Activated naive CD4-positive, alpha-beta T cell treated with anti-CD3 and anti-CD28 coated beads for 36 hours (primary cell): ENCODE measurements at regions of chr7 and their contacts with region 1.

Region 1: GRCh38 chr7:76314042-76314721 is 11.7 kb downstream of the HSPB1 start:
- DNase-seq: peak; percentile 99
- H3K4me3 Mint-ChIP-seq: no peak overlapping the region
- H3K27ac Mint-ChIP-seq: no peak overlapping the region
- H3K4me1 Mint-ChIP-seq: peaks cover 18% of the 10 kb centered on the region
- H3K27me3 Mint-ChIP-seq: no peaks in the 10 kb centered on the region

Region 2: DNA sequence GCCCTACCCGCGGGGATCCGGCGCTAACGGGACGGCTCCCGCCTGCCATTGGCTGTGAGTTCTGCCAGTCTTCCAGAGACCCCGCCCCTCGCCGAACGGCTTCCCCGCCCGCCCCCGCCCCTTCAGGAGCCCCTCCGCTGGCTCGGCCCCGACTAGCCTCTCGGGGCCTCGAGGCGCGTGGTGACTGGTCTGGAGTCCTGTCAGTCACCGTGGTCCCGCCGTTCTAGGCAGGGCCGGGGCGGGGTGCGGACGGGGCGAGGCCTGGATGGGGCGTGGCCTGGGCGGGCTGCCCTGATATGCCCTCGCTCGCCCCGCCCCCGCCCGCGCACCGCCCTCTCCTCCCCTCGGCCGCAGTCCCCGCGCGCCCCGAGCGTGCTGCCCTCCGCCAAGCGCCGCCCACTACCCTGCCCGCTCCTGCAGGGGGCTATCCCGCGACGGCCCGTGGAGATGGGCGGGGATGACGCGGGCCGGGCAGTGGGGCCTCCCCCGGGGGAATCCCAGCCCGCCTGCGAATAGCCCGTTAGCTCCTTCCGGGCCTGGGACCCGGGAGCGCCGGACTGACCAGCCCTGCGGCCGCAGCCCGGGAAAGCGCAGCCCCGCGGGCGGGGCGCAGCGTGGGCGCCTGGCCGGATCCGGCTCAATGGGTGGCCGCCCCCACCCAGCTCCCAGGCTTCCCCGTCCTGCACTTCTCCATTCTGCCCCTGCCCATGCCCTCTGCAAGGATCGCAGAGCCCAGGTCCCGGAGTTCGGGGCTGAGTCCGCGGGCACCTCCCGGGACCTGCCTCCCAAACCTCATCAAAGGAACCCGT is 575.0 kb before region 1 on chr7:
- CTCF ChIA-PET with region 1: no interaction called
- intact Hi-C with region 1: loop called (anchors 2 kb)
- DNase-seq: peak; percentile 99
- H3K4me3 Mint-ChIP-seq: peak overlapping the region; percentile 92
- H3K27ac Mint-ChIP-seq: peak overlapping the region; percentile 81
- H3K4me1 Mint-ChIP-seq: peaks cover 14% of the 10 kb centered on the region
- H3K27me3 Mint-ChIP-seq: peaks cover 10% of the 10 kb centered on the region

Region 3: DNA sequence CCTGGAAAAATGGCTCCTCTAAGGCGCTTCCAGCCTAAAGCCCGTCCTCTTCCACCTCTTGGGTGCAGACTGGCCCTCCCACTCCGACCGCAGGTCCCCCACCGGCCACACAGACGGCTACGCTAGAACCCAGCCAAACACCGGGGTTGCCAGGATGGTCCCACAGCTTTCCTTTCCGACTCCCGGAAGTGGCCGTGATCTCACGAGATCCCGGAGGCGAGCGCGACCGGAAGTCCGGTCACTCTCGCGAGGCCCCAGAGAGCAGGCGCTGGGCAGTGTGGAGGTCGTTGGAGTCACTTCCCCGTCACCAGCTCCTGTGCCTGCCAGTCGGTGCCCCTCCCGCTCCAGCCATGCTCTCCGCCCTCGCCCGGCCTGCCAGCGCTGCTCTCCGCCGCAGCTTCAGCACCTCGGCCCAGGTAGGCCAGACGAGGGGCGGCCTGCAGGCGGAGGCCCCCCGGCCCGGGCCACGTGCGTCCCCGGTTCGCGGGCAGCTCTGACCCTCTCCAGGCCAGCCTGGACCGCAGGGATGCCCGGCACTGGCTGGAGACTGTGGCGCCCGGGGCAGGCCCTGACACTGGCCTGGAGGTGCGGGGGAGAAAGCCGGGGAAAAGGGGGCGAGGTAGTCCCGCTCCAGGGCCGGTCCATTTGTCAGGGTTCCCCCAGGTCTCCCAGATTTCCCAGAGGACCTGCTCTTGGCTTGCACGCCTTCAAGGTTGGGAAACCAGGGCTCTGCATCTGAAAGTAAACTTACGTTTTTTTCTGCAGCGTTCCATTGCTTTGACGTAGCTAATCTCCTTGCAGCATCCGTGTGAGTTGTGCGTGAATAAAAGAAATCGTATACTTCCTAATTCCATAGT is 266.1 kb before region 1 on chr7 and contains the starts of genes MDH2 and STYXL1:
- CTCF ChIA-PET with region 1: interaction called, 6 read pairs
- intact Hi-C with region 1: loop called (anchors 2 kb)
- DNase-seq: peak; percentile 95
- H3K4me3 Mint-ChIP-seq: peak within 1 kb of the TSS; percentile 98
- H3K27ac Mint-ChIP-seq: peak within 1 kb of the TSS; percentile 96
- H3K4me1 Mint-ChIP-seq: peaks cover 54% of the 10 kb centered on the region
- H3K27me3 Mint-ChIP-seq: no peaks in the 10 kb centered on the region
- total RNA-seq, gene MDH2: 325 TPM
- total RNA-seq, gene STYXL1: 27.6 to 28.1 TPM

Region 4: GRCh38 chr7:76262683-76263402 is 51.3 kb before region 1 on chr7:
- CTCF ChIA-PET with region 1: interaction called, 21 read pairs
- intact Hi-C with region 1: loop called (anchors 1 kb)
- DNase-seq: peak; percentile 60
- H3K4me3 Mint-ChIP-seq: no peak overlapping the region
- H3K27ac Mint-ChIP-seq: no peak overlapping the region
- H3K4me1 Mint-ChIP-seq: peaks cover 4% of the 10 kb centered on the region
- H3K27me3 Mint-ChIP-seq: peaks cover 21% of the 10 kb centered on the region

Region 5: DNA sequence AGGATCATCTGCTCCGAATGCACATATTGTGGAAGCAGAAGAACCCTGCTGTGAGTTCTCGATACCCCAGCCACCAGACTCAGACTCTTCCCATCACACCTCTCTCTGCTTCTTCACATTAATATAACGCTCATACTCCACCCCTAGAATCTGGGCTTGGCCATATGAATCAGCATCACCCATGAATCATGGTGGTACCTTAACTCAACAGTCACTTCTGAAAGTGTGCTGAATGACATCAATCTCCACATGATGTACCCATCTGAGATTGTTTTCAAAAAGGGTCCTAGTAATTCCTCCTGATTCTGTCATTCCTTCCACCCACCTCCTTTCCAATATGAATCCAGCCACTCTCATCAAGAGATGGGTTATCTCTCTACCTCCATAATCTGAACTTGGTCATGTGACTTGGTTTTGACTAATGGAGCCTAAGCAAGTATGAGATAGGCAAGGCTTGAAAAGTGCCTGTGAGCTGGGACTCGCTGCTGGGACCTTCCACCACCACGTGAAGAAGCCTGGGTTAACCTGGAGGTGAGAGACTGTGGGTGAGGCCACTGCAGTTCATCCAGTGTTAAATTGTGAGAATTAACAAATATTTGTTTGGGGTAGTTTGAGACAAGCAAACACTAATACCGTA is 29.2 kb after region 1 on chr7:
- CTCF ChIA-PET with region 1: no interaction called
- intact Hi-C with region 1: loop called (anchors 2 kb)
- DNase-seq: peak; percentile 43
- H3K4me3 Mint-ChIP-seq: no peak overlapping the region
- H3K27ac Mint-ChIP-seq: peak overlapping the region; percentile 48
- H3K4me1 Mint-ChIP-seq: peaks cover 82% of the 10 kb centered on the region
- H3K27me3 Mint-ChIP-seq: no peaks in the 10 kb centered on the region

Region 6: GRCh38 chr7:77696198-77697028 is 1382.2 kb after region 1 on chr7 and contains the start of gene RSBN1L:
- CTCF ChIA-PET with region 1: no interaction called
- intact Hi-C with region 1: loop called (anchors 2 kb)
- DNase-seq: peak; percentile 98
- H3K4me3 Mint-ChIP-seq: peak within 1 kb of the TSS; percentile 97
- H3K27ac Mint-ChIP-seq: peak within 1 kb of the TSS; percentile 96
- H3K4me1 Mint-ChIP-seq: peaks cover 44% of the 10 kb centered on the region
- H3K27me3 Mint-ChIP-seq: no peaks in the 10 kb centered on the region
- total RNA-seq, gene RSBN1L: 15.7 to 16.9 TPM